Ascending aorta (tissue), 2 donors: ENCODE measurements at regions of chr2 and their contacts with region 1.

Region 1: DNA sequence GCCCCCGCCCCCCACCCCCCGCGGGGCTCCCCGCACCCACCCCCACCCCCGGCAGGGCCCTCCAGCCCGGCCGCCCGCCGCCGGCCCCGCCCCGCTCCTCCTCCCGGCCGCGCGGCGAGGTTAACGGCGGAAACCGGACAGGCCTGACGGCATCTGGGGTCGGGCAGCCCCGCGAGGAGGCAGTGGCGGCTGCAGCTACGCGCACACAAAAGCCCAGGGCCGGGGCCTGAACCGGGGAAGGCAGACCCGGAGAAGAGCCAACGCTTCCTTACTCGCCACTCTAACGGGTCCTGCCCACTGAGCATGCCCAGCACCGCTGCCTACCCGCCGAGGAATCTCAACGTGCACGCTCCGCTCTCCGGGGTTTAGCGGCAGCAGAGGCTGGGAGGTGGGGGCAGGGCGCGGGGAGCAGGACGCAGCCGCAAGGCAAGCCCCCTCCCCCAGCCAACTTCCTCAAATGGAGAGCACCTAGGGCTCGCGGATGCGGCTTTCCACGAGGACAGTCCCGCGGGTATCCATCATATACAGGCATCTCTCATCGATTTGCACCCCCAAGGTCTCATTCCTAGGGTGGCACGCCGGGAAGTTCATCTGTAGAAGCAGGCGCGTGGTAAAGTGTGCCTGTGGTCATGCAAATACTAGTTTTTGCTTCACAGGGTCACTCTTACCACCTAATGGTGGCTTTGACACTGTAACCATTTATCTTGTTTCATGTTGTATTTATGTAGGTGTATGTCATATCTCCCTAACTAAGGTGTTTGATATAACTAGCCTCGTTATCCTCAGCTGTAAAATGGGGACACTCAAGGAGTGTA is at the start of gene MEMO1:
- DNase-seq: peak; percentile 76 to 96
- H3K4me3 ChIP-seq: peak within 1 kb of the TSS; percentile 70 to 89
- H3K27ac ChIP-seq: peak within 1 kb of the TSS; percentile 86 to 98
- H3K4me1 ChIP-seq: peaks cover 3 to 23% of the 10 kb centered on the region in 2 donors
- H3K27me3 ChIP-seq: no peaks in the 10 kb centered on the region
- CTCF ChIP-seq: peak in 1 of 3 experiments; percentile 9
- total RNA-seq, gene MEMO1: 4.6 TPM

Region 2: DNA sequence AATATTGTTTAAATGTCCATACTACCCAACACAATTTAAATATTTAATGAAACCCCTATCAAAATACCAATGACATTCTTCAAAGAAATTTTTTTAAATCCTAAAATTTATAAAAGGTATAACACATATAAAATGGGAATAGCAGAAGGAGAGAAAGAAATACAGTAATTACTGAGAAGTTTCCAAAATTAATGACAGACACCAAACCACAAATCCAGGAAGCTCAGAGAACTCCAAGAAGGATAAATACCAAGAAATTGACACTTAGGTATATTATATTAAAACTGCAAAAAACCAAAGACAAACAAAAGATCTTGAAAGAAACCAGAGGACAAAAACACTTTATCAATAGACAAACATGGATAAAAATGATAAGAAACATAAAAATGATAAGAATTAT is 101.2 kb before region 1 on chr2:
- intact Hi-C with region 1: no loop called
- DNase-seq: no peak
- H3K4me3 ChIP-seq: no peak overlapping the region
- H3K27ac ChIP-seq: no peak overlapping the region
- H3K4me1 ChIP-seq: no peaks in the 10 kb centered on the region
- H3K27me3 ChIP-seq: no peaks in the 10 kb centered on the region
- CTCF ChIP-seq: no peak

Region 3: GRCh38 chr2:32063310-32064161 is 52.7 kb after region 1 on chr2 and contains the start of gene SPAST:
- intact Hi-C with region 1: loop called (anchors 1 kb)
- DNase-seq: peak; percentile 89 to 99
- H3K4me3 ChIP-seq: peak within 1 kb of the TSS; percentile 78 to 91
- H3K27ac ChIP-seq: peak within 1 kb of the TSS; percentile 87 to 92
- H3K4me1 ChIP-seq: peaks cover 0 to 5% of the 10 kb centered on the region in 2 donors
- H3K27me3 ChIP-seq: no peaks in the 10 kb centered on the region
- CTCF ChIP-seq: peak; percentile 57 to 77 (median 63)
- total RNA-seq, gene SPAST: 12.1 TPM

Region 4: DNA sequence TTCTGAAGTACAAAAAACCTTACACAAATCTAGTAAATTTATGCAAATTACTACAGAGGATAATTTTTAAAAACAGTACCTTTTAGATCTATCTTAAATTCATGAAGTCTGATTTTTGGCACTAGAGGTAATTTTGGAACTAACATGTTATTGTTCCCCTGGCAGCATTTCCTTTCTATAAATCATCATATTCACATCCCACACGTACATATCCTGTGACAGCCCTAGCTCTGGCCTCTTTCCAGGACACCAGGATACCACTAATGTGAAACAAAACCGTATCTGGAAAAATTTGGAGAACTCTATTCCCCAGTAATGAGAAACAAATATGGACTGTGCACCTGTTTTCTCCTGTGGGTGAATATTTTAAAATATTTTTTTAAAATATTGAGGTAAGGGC is 331.9 kb after region 1 on chr2:
- intact Hi-C with region 1: no loop called
- DNase-seq: no peak
- H3K4me3 ChIP-seq: no peak overlapping the region
- H3K27ac ChIP-seq: no peak overlapping the region
- H3K4me1 ChIP-seq: no peaks in the 10 kb centered on the region
- H3K27me3 ChIP-seq: no peaks in the 10 kb centered on the region
- CTCF ChIP-seq: no peak